Activated CD4-positive, alpha-beta T cell treated with anti-CD3 and anti-CD28 coated beads for 36 hours (primary cell): ENCODE measurements at regions of chr19 and their contacts with region 1.

Region 1: GRCh38 chr19:52248241-52248640 is 21.1 kb upstream of the ZNF766 start:
- DNase-seq: peak; percentile 82
- ATAC-seq: peak; percentile 93
- H3K4me3 Mint-ChIP-seq: no peak overlapping the region
- H3K27ac Mint-ChIP-seq: no peak overlapping the region
- H3K4me1 Mint-ChIP-seq: no peaks in the 10 kb centered on the region
- H3K27me3 Mint-ChIP-seq: no peaks in the 10 kb centered on the region

Region 2: GRCh38 chr19:52343548-52343947 is 95.3 kb after region 1 on chr19:
- CTCF ChIA-PET with region 1: no interaction called
- POLR2A ChIA-PET with region 1: no interaction called
- intact Hi-C with region 1: loop called in 1 of 2 experiments (anchors 5 kb)
- DNase-seq: peak; percentile 75
- ATAC-seq: peak; percentile 90
- H3K4me3 Mint-ChIP-seq: no peak overlapping the region
- H3K27ac Mint-ChIP-seq: no peak overlapping the region
- H3K4me1 Mint-ChIP-seq: peaks cover 2% of the 10 kb centered on the region
- H3K27me3 Mint-ChIP-seq: no peaks in the 10 kb centered on the region